ENCODE measurements at regions of chr3 and their contacts with region 1.

Region 1: DNA sequence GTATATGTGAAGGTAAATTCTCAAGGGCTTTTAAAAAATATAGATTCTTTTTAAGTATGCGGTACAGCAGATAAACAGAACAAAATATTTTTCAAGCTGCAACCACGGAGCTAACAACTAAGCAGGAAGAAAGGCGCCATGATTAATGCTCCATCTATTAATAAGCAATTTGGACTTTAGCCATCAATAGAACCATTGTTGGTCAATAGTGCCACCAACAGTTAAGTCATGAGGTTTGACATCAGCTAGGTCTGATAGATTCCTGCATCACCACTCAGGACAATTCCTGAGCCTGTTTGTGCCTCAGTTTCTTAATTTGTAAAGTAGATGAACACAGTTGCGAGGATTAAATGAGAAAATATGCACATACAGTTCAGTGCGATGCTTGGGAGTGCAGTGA is 65.1 kb upstream of the FAM3D start:
- H3K4me3 Mint-ChIP-seq: no peak overlapping the region
- H3K27ac Mint-ChIP-seq: no peak overlapping the region
- H3K4me1 Mint-ChIP-seq: no peaks in the 10 kb centered on the region
- H3K27me3 Mint-ChIP-seq: no peaks in the 10 kb centered on the region

Region 2: GRCh38 chr3:58640700-58641372 is 90.8 kb before region 1 on chr3:
- intact Hi-C with region 1: loop called (anchors 5 kb)
- H3K4me3 Mint-ChIP-seq: no peak overlapping the region
- H3K27ac Mint-ChIP-seq: no peak overlapping the region
- H3K4me1 Mint-ChIP-seq: no peaks in the 10 kb centered on the region
- H3K27me3 Mint-ChIP-seq: no peaks in the 10 kb centered on the region